Mammary epithelial cell (primary cell): ENCODE measurements at regions of chr12 and their contacts with region 1.

Region 1: GRCh38 chr12:65556681-65557437 is 267.4 kb upstream of the HMGA2 start:
- DNase-seq: peak; percentile 94
- H3K4me3 ChIP-seq: no peak overlapping the region
- H3K27ac ChIP-seq: peak overlapping the region; percentile 77
- H3K4me1 ChIP-seq: peaks cover 26% of the 10 kb centered on the region
- H3K27me3 ChIP-seq: no peaks in the 10 kb centered on the region
- CTCF ChIP-seq: peak; percentile 94 to 98

Region 2: GRCh38 chr12:65470256-65470655 is 86.6 kb before region 1 on chr12:
- CTCF ChIA-PET with region 1: no interaction called
- dilution Hi-C with region 1: no loop called
- in situ Hi-C with region 1: no loop called
- intact Hi-C with region 1: no loop called
- DNase-seq: no peak
- H3K4me3 ChIP-seq: no peak overlapping the region
- H3K27ac ChIP-seq: no peak overlapping the region
- H3K4me1 ChIP-seq: no peaks in the 10 kb centered on the region
- H3K27me3 ChIP-seq: no peaks in the 10 kb centered on the region
- CTCF ChIP-seq: no peak

Region 3: GRCh38 chr12:65631621-65632111 is 74.8 kb after region 1 on chr12:
- CTCF ChIA-PET with region 1: interaction called, 4 read pairs
- dilution Hi-C with region 1: no loop called
- in situ Hi-C with region 1: no loop called
- intact Hi-C with region 1: loop called (anchors 1 kb)
- DNase-seq: peak; percentile 100
- H3K4me3 ChIP-seq: no peak overlapping the region
- H3K27ac ChIP-seq: peak overlapping the region; percentile 100
- H3K4me1 ChIP-seq: peaks cover 54% of the 10 kb centered on the region
- H3K27me3 ChIP-seq: no peaks in the 10 kb centered on the region
- CTCF ChIP-seq: no peak

Region 4: DNA sequence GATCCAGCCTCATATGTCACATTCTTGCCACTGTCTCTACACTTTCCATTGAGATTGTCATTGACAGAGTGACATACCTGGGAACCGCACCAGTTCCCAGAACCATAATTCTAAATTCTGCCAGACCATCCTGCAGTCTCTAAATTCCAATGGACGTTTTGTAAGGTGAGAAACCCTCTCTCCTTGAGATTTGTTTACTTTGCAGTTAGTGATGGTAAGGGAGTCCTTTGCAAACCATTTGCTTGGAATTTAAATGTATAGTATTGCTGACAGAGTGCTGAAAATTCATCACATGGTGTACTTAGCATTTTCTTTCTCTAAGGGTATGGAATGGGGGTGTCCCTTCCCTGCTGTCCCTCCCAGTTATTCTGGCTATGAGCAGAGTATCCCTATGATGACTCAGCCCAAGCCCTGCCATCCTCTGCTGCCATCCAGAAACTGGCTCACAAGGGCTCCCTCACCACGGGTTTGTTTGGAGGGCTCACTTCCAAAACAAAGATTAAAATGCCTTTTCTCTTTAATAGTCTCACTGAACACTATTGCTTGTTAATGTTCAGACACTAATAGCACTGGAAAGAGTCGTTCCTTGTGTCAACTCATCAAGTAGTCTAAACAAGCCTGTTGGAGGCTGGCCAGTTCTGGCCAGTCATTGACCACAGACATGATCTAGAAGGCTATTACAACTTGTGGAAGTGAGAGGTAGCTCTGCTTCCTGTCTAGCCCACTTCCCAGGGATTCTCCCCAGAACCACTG is 138.4 kb after region 1 on chr12:
- CTCF ChIA-PET with region 1: interaction called, 3 read pairs
- dilution Hi-C with region 1: no loop called
- in situ Hi-C with region 1: no loop called
- intact Hi-C with region 1: loop called (anchors 5 kb)
- DNase-seq: peak; percentile 98
- H3K4me3 ChIP-seq: no peak overlapping the region
- H3K27ac ChIP-seq: peak overlapping the region; percentile 67
- H3K4me1 ChIP-seq: peaks cover 28% of the 10 kb centered on the region
- H3K27me3 ChIP-seq: no peaks in the 10 kb centered on the region
- CTCF ChIP-seq: no peak

Region 5: GRCh38 chr12:65881965-65882413 is 325.1 kb after region 1 on chr12:
- CTCF ChIA-PET with region 1: no interaction called
- dilution Hi-C with region 1: no loop called
- in situ Hi-C with region 1: no loop called
- intact Hi-C with region 1: loop called (anchors 2 kb)
- DNase-seq: no peak
- H3K4me3 ChIP-seq: no peak overlapping the region
- H3K27ac ChIP-seq: no peak overlapping the region
- H3K4me1 ChIP-seq: peaks cover 46% of the 10 kb centered on the region
- H3K27me3 ChIP-seq: no peaks in the 10 kb centered on the region
- CTCF ChIP-seq: peak in 1 of 2 donors; percentile 22

Region 6: GRCh38 chr12:66087365-66087943 is 530.6 kb after region 1 on chr12:
- CTCF ChIA-PET with region 1: no interaction called
- dilution Hi-C with region 1: no loop called
- in situ Hi-C with region 1: no loop called
- intact Hi-C with region 1: loop called (anchors 10 kb)
- DNase-seq: peak; percentile 54
- H3K4me3 ChIP-seq: no peak overlapping the region
- H3K27ac ChIP-seq: no peak overlapping the region
- H3K4me1 ChIP-seq: no peaks in the 10 kb centered on the region
- H3K27me3 ChIP-seq: no peaks in the 10 kb centered on the region
- CTCF ChIP-seq: peak; percentile 88